ENCODE measurements at regions of chr10 and their contacts with region 1.

Region 1: GRCh38 chr10:119049361-119049760 is 19.8 kb downstream of the NANOS1 start:
- DNase-seq: no peak
- ATAC-seq: no peak
- H3K4me3 ChIP-seq: no peak overlapping the region
- H3K27ac ChIP-seq: no peak overlapping the region
- H3K4me1 ChIP-seq: no peaks in the 10 kb centered on the region
- H3K27me3 ChIP-seq: no peaks in the 10 kb centered on the region
- CTCF ChIP-seq: no peak

Region 2: GRCh38 chr10:119401671-119402395 is 352.5 kb after region 1 on chr10:
- intact Hi-C with region 1: no loop called
- DNase-seq: peak; percentile 81 to 88
- ATAC-seq: peak; percentile 68 to 90 (median 85)
- H3K4me3 ChIP-seq: no peak overlapping the region
- H3K27ac ChIP-seq: peak overlapping the region; percentile 37
- H3K4me1 ChIP-seq: peaks cover 4% of the 10 kb centered on the region
- H3K27me3 ChIP-seq: no peaks in the 10 kb centered on the region
- CTCF ChIP-seq: no peak

Region 3: GRCh38 chr10:119575506-119575905 is 526.1 kb after region 1 on chr10:
- intact Hi-C with region 1: loop called in 1 of 2 experiments (anchors 5 kb)
- DNase-seq: no peak
- ATAC-seq: peak in 2 of 4 donors; percentile 36 to 67
- H3K4me3 ChIP-seq: no peak overlapping the region
- H3K27ac ChIP-seq: no peak overlapping the region
- H3K4me1 ChIP-seq: no peaks in the 10 kb centered on the region
- H3K27me3 ChIP-seq: no peaks in the 10 kb centered on the region
- CTCF ChIP-seq: no peak

Measured in psoas muscle (tissue), 8 donors.